CD4-positive, alpha-beta memory T cell (primary cell): ENCODE measurements at regions of chr20 and their contacts with region 1.

Region 1: GRCh38 chr20:63641792-63642544 is 11.3 kb downstream of the STMN3 start:
- DNase-seq: peak; percentile 96 to 98 (median 97)
- H3K4me3 ChIP-seq: peak overlapping the region; percentile 57 to 92
- H3K4me3 Mint-ChIP-seq: peak overlapping the region; percentile 61 to 90 (median 80)
- H3K27ac ChIP-seq: peak overlapping the region; percentile 76
- H3K27ac Mint-ChIP-seq: peak overlapping the region in 4 of 7 donors; percentile 47 to 89 (median 82)
- H3K4me1 ChIP-seq: peaks cover 31% of the 10 kb centered on the region
- H3K4me1 Mint-ChIP-seq: peaks cover 13 to 43% (median 28%) of the 10 kb centered on the region in 4 donors
- H3K27me3 ChIP-seq: no peaks in the 10 kb centered on the region
- H3K27me3 Mint-ChIP-seq: peaks cover 0 to 2% of the 10 kb centered on the region in 2 donors

Region 2: GRCh38 chr20:63482856-63483695 is 158.9 kb before region 1 on chr20:
- CTCF ChIA-PET with region 1: no interaction called
- POLR2A ChIA-PET with region 1: no interaction called
- intact Hi-C with region 1: no loop called
- DNase-seq: peak in 1 of 5 donors; percentile 27
- H3K4me3 ChIP-seq: no peak overlapping the region
- H3K4me3 Mint-ChIP-seq: no peak overlapping the region
- H3K27ac ChIP-seq: no peak overlapping the region
- H3K27ac Mint-ChIP-seq: no peak overlapping the region
- H3K4me1 ChIP-seq: no peaks in the 10 kb centered on the region
- H3K4me1 Mint-ChIP-seq: peaks cover 0 to 4% (median 3%) of the 10 kb centered on the region in 4 donors
- H3K27me3 ChIP-seq: peaks cover 7% of the 10 kb centered on the region
- H3K27me3 Mint-ChIP-seq: peaks cover 20% of the 10 kb centered on the region in 2 donors

Region 3: GRCh38 chr20:63520504-63520933 is 121.4 kb before region 1 on chr20 and contains the start of gene PPDPF:
- CTCF ChIA-PET with region 1: no interaction called
- POLR2A ChIA-PET with region 1: interaction called, 19 read pairs
- intact Hi-C with region 1: no loop called
- DNase-seq: peak; percentile 80 to 89 (median 83)
- H3K4me3 ChIP-seq: peak within 1 kb of the TSS; percentile 77 to 84
- H3K4me3 Mint-ChIP-seq: peak within 1 kb of the TSS; percentile 80 to 84 (median 82)
- H3K27ac ChIP-seq: peak within 1 kb of the TSS; percentile 74
- H3K27ac Mint-ChIP-seq: peak within 1 kb of the TSS; percentile 57 to 82 (median 74)
- H3K4me1 ChIP-seq: peaks cover 23% of the 10 kb centered on the region
- H3K4me1 Mint-ChIP-seq: peaks cover 6 to 28% (median 11%) of the 10 kb centered on the region in 4 donors
- H3K27me3 ChIP-seq: no peaks in the 10 kb centered on the region
- H3K27me3 Mint-ChIP-seq: no peaks in the 10 kb centered on the region
- total RNA-seq, gene PPDPF: 208 to 229 TPM

Region 4: DNA sequence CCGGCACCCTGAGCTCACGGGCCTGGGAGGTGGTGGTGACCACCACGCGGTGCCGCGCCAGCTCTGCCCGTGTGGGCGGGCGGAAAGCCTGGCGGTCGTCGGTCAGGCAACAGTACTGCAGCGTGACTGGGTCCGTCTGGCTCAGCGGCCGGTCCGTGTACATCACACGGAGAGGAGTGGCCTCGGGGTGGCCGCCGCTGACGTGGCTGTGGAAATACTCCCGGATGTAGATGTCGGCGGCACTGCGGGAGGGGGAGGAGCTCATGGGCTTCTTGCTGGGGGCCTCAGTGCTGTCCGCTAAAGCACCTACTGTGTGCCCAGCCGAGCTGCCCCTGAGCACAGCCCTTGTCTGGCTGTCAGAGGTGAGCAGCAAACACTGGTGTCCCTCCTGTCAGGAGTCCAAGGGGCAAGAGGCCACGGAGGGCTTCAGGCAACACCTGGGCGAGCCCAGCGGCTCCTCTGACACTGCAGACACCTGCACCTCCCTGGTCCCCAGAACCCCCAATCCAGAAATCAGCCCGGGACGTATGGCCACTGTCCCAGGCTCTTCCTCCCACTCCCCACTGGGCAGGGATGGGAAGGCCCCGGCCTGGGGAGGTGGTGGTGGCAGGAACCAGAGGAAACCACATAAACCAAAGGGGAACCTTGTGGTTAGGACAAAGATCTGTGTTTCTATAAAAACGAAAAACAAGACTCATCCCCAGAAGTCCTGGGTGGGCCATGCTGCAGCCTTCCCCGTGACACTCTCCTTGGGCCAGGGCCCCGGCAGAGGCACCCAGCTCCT is 74.4 kb before region 1 on chr20:
- CTCF ChIA-PET with region 1: interaction called, 3 read pairs
- POLR2A ChIA-PET with region 1: interaction called, 13 read pairs
- intact Hi-C with region 1: no loop called
- DNase-seq: peak; percentile 39 to 71 (median 57)
- H3K4me3 ChIP-seq: peak overlapping the region; percentile 42 to 68
- H3K4me3 Mint-ChIP-seq: peak overlapping the region; percentile 78 to 92 (median 84)
- H3K27ac ChIP-seq: peak overlapping the region; percentile 24
- H3K27ac Mint-ChIP-seq: peak overlapping the region in 5 of 7 donors; percentile 57 to 87 (median 60)
- H3K4me1 ChIP-seq: peaks cover 28% of the 10 kb centered on the region
- H3K4me1 Mint-ChIP-seq: peaks cover 6 to 31% (median 18%) of the 10 kb centered on the region in 4 donors
- H3K27me3 ChIP-seq: no peaks in the 10 kb centered on the region
- H3K27me3 Mint-ChIP-seq: no peaks in the 10 kb centered on the region

Region 5: DNA sequence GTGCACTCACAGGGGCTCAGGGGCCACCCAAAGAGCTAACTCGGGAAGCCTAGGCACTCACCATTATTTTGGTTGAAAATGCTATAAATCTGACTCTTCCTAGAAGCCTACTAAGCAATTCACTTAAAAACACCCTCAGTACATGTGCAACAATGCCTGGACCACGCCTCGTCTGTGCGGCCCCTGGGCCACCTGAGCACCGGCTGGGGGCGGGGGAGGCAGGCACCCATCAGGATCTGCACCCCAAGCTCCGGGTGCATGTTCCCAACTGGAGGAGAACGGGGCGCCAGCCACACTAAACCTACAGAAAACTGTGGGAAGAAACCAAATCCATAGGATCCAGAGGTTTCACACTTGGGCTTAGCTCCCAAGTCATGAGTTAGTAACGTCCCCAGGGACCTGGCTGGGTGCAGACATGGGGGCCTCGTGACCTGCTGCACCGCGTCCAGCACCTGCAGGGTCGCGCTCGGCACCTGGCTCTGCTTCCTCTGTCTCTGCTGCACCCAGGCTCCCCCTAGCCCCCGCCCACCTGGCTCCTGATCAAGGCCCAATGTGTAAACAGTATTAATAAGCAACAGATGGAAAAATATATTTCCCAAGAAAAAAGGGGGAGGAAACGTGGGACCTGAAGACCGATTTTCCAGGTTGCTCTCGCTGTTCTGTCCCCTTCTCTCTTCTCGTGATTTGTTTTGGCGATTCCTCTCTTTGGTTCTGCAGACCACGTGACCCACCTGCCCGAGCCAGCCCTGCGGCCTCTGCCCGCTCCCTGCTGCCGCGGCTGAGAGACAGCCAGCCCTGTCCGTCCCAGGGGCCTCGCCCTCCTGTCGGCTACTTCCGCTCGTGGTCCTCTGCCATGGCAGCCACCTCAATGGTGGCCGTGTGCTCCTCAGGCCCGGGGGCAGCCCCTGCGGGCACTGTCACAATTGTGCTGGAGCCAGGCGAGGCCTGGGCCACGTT is 52.4 kb before region 1 on chr20:
- CTCF ChIA-PET with region 1: no interaction called
- POLR2A ChIA-PET with region 1: no interaction called
- intact Hi-C with region 1: no loop called
- DNase-seq: no peak
- H3K4me3 ChIP-seq: no peak overlapping the region
- H3K4me3 Mint-ChIP-seq: no peak overlapping the region
- H3K27ac ChIP-seq: no peak overlapping the region
- H3K27ac Mint-ChIP-seq: no peak overlapping the region
- H3K4me1 ChIP-seq: peaks cover 9% of the 10 kb centered on the region
- H3K4me1 Mint-ChIP-seq: peaks cover 0 to 10% (median 2%) of the 10 kb centered on the region in 4 donors
- H3K27me3 ChIP-seq: no peaks in the 10 kb centered on the region
- H3K27me3 Mint-ChIP-seq: no peaks in the 10 kb centered on the region

Region 6: DNA sequence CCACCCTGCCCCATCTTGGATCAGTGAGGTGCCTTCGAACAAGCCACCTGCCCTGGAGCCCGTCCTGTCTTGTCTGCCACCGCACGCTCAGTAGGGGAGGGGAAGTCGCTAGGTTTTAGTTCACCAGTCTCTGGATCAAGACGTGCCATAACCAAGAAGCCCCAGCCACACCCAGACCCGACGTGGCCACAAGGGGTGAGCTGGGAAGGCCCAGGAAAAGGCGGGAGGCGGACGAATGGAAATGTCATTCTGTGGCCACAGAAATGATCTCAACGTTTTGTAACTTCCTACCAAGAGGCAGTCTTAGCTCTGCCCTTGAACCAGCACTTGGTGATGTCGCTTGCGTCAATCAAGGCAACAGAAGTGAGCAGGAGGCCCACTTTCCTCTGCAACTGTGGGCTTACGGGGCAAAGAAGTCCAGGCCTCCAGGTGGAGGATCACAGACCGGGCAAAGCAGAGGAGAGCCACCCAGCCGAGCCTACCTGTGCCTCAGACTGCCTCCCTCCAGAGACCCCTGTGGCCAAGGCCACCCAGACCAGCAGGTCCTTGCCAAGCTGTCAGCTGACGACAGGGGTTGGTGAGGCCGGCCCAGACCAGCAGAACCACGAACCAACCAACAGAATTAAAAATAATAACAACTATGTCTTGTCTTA is 29.6 kb before region 1 on chr20:
- CTCF ChIA-PET with region 1: interaction called, 28 read pairs
- POLR2A ChIA-PET with region 1: interaction called, 658 read pairs
- intact Hi-C with region 1: loop called (anchors 1 kb)
- DNase-seq: no peak
- H3K4me3 ChIP-seq: no peak overlapping the region
- H3K4me3 Mint-ChIP-seq: no peak overlapping the region
- H3K27ac ChIP-seq: no peak overlapping the region
- H3K27ac Mint-ChIP-seq: no peak overlapping the region
- H3K4me1 ChIP-seq: no peaks in the 10 kb centered on the region
- H3K4me1 Mint-ChIP-seq: peaks cover 0 to 3% (median 2%) of the 10 kb centered on the region in 4 donors
- H3K27me3 ChIP-seq: no peaks in the 10 kb centered on the region
- H3K27me3 Mint-ChIP-seq: no peaks in the 10 kb centered on the region

Region 7: DNA sequence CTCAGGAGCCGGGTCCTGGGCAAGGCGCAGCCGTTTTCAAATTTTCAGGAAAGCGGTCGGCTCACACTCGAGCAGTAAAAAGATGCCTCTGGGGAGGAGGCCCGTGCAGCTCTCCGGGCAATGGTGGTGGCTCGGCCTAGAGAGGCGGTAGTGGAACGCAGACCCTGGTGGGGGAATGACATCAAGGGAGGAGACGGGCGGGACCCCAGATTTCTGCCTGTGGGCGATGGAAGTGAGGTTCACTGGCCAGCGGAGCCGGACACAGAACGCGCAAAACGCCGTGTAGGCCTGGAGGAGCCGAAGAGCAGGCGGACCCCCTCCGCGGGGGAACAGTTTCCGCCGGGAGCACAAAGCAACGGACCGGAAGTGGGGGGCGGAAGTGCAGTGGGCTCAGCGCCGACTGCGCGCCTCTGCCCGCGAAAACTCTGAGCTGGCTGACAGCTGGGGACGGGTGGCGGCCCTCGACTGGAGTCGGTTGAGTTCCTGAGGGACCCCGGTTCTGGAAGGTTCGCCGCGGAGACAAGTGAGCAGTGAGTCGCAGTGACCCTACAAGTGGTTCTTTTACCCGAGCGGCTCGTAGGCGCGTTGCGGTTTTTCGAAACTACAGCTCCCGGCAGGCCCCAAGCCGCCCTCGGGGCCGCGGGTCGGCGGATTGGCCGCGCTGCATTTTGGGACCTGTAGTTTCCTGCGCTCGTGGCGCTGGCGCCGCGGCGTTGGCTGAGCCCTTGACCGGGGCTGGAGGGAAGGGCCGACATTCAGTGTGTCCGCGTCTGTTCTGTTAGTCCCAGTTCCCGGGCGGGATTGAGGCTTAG is 16.2 kb after region 1 on chr20 and contains the start of gene RTEL1:
- CTCF ChIA-PET with region 1: interaction called, 6 read pairs
- POLR2A ChIA-PET with region 1: interaction called, 60 read pairs
- intact Hi-C with region 1: loop called (anchors 1 kb)
- DNase-seq: peak; percentile 86 to 93 (median 88)
- H3K4me3 ChIP-seq: peak within 1 kb of the TSS; percentile 91 to 97
- H3K4me3 Mint-ChIP-seq: peak within 1 kb of the TSS; percentile 92 to 98 (median 96)
- H3K27ac ChIP-seq: peak within 1 kb of the TSS; percentile 75
- H3K27ac Mint-ChIP-seq: peak within 1 kb of the TSS; percentile 94 to 98 (median 96)
- H3K4me1 ChIP-seq: peaks cover 42% of the 10 kb centered on the region
- H3K4me1 Mint-ChIP-seq: peaks cover 17 to 48% (median 24%) of the 10 kb centered on the region in 4 donors
- H3K27me3 ChIP-seq: no peaks in the 10 kb centered on the region
- H3K27me3 Mint-ChIP-seq: no peaks in the 10 kb centered on the region
- total RNA-seq, gene RTEL1: 30.9 to 36.0 TPM